Activated CD4-positive, alpha-beta T cell treated with anti-CD3 and anti-CD28 coated beads for 36 hours (primary cell): ENCODE measurements at regions of chr10 and their contacts with region 1.

Region 1: GRCh38 chr10:63629363-63630084 is 108.3 kb downstream of the REEP3 start:
- DNase-seq: peak; percentile 92
- ATAC-seq: peak; percentile 72
- H3K4me3 Mint-ChIP-seq: peak overlapping the region; percentile 80
- H3K27ac Mint-ChIP-seq: peak overlapping the region; percentile 86
- H3K4me1 Mint-ChIP-seq: peaks cover 25% of the 10 kb centered on the region
- H3K27me3 Mint-ChIP-seq: no peaks in the 10 kb centered on the region

Region 2: DNA sequence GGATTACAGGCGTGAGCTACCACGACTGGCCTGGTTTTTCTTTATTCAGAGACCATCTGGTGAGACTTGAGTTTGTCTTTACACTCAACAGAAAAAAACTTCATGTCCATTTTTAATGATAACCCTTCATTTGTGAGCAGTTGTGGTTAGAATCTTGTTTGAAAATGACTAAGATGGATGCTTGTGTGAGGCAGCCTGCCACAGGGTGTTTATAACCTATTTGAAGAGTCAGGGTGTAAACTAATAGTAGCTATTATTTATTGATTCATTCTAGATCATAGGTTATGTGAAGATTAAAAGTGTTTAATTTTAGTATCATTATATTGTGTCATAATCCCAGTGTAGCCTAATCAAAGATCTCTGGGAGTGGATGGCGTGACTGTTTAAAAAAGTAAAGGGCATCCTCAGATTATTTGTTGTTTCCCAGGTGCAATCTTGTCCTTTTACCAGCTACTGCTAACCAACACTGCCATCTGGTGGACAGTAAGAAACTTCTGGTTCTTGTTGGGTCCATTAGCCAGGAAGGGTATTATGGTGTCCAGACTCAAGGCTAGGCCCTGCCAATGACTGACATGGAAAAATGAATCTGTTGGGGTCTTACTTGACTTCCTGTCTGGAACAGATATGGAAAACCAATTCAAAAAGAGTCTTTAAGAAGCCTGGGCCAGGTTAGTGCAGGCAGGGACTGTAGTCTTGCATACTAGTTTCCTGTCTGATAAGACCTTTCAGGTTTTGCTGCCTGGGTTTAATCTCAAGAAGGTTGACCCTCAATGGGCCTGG is 471.5 kb before region 1 on chr10:
- CTCF ChIA-PET with region 1: interaction called, 17 read pairs
- POLR2A ChIA-PET with region 1: interaction called, 6 read pairs
- intact Hi-C with region 1: no loop called
- DNase-seq: peak; percentile 61
- ATAC-seq: peak; percentile 61
- H3K4me3 Mint-ChIP-seq: no peak overlapping the region
- H3K27ac Mint-ChIP-seq: no peak overlapping the region
- H3K4me1 Mint-ChIP-seq: peaks cover 6% of the 10 kb centered on the region
- H3K27me3 Mint-ChIP-seq: no peaks in the 10 kb centered on the region

Region 3: GRCh38 chr10:63217120-63217605 is 412.4 kb before region 1 on chr10:
- CTCF ChIA-PET with region 1: interaction called, 25 read pairs
- POLR2A ChIA-PET with region 1: no interaction called
- intact Hi-C with region 1: loop called (anchors 1 to 2 kb)
- DNase-seq: no peak
- ATAC-seq: peak; percentile 90
- H3K4me3 Mint-ChIP-seq: no peak overlapping the region
- H3K27ac Mint-ChIP-seq: peak overlapping the region; percentile 19
- H3K4me1 Mint-ChIP-seq: peaks cover 55% of the 10 kb centered on the region
- H3K27me3 Mint-ChIP-seq: no peaks in the 10 kb centered on the region

Region 4: DNA sequence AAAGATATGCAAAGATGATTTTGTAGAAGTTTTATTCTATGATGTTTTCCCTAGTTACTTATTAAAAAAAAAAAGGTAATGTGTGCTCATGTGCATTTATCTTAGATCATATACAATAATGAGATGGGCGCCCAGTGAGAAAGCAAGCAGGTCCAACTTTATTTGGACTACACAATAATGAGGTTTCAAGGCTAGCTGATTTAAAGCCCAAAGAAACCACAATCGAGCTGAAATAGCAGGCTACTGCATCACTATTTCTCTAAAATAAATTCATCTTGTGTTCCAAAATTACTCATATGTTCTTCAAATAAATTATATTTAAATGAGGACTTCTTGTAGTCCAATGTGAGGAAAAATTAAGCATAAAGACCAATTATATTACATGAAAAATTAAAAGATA is 273.8 kb before region 1 on chr10:
- CTCF ChIA-PET with region 1: no interaction called
- POLR2A ChIA-PET with region 1: no interaction called
- intact Hi-C with region 1: loop called in 1 of 2 experiments (anchors 1 kb)
- DNase-seq: no peak
- ATAC-seq: no peak
- H3K4me3 Mint-ChIP-seq: no peak overlapping the region
- H3K27ac Mint-ChIP-seq: peak overlapping the region; percentile 40
- H3K4me1 Mint-ChIP-seq: peaks cover 34% of the 10 kb centered on the region
- H3K27me3 Mint-ChIP-seq: no peaks in the 10 kb centered on the region

Region 5: GRCh38 chr10:63430097-63430998 is 199.2 kb before region 1 on chr10:
- CTCF ChIA-PET with region 1: no interaction called
- POLR2A ChIA-PET with region 1: no interaction called
- intact Hi-C with region 1: no loop called
- DNase-seq: no peak
- ATAC-seq: no peak
- H3K4me3 Mint-ChIP-seq: no peak overlapping the region
- H3K27ac Mint-ChIP-seq: no peak overlapping the region
- H3K4me1 Mint-ChIP-seq: peaks cover 46% of the 10 kb centered on the region
- H3K27me3 Mint-ChIP-seq: no peaks in the 10 kb centered on the region

Region 6: GRCh38 chr10:63521416-63522276 is 107.9 kb before region 1 on chr10:
- CTCF ChIA-PET with region 1: interaction called, 3 read pairs
- POLR2A ChIA-PET with region 1: no interaction called
- intact Hi-C with region 1: loop called (anchors 1 to 2 kb)
- DNase-seq: peak; percentile 75
- ATAC-seq: peak; percentile 72
- H3K4me3 Mint-ChIP-seq: peak overlapping the region; percentile 86
- H3K27ac Mint-ChIP-seq: peak overlapping the region; percentile 94
- H3K4me1 Mint-ChIP-seq: peaks cover 57% of the 10 kb centered on the region
- H3K27me3 Mint-ChIP-seq: no peaks in the 10 kb centered on the region

Region 7: GRCh38 chr10:63707254-63707910 is 77.9 kb after region 1 on chr10:
- CTCF ChIA-PET with region 1: interaction called, 8 read pairs
- POLR2A ChIA-PET with region 1: interaction called, 3 read pairs
- intact Hi-C with region 1: loop called in 1 of 2 experiments (anchors 1 kb)
- DNase-seq: peak; percentile 39
- ATAC-seq: peak; percentile 94
- H3K4me3 Mint-ChIP-seq: no peak overlapping the region
- H3K27ac Mint-ChIP-seq: no peak overlapping the region
- H3K4me1 Mint-ChIP-seq: peaks cover 19% of the 10 kb centered on the region
- H3K27me3 Mint-ChIP-seq: no peaks in the 10 kb centered on the region